Sciatic nerve (tissue), 2 donors: ENCODE measurements at regions of chr7 and their contacts with region 1.

Region 1: DNA sequence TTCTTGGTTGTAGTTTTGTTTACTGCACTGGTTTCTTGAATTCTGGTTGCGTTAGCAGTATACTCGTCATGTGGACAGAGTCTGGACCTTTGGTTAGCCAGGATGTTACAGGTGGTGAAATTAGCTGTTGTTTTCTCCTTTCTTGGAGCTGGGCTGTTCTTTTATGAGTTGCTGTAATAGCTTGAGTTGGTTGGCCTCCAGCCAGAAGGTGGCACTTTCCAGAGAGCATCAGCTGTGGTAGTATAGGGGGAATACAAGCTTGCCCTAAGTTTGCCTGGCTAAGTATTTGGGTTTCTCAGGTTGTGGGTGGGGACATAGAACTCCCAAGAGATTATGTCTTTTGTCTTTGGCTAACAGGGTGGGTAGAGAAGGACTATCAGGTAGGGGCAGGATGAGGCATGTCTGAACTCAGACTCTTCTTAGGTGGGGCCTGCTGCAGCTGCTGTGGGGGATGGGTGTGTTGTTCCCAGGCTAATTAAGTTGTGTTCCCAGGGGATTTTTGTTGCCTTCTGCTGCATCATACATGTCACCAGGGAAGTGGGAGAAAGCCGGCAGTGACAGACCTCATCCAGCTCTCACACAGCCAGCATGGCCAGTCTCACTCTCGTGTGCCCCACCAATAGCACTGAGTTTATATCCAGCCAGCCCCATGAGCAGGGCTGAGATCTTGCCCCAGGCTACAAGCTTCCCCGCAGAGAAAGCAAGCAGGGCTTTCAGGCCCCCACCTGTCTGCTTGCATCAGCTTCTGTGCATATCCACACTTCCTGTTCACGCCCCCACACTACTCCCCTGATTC is 246.7 kb upstream of the TPK1 start:
- DNase-seq: no peak
- ATAC-seq: no peak

Region 2: DNA sequence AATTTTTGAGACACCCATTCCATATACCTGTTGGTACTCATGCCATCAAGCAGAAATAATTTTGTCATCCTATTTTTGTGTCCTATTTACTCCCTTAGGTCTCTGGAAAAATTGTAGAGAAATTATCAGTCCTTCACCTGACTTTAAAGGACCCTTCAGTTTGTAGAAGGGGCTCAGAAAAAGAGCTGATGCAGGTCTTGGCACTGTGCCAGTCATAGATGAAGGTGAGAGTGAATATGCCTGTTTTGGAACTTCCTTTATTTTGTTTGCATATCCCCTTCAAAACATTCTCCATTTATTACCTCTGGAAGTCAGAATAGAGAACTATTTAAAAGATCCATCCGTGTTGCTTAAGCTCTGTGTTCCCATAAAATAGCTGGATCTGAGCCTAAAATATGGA is 74.3 kb after region 1 on chr7:
- intact Hi-C with region 1: loop called (anchors 2 kb)
- DNase-seq: no peak
- ATAC-seq: no peak